Gastrocnemius medialis (tissue), 4 donors: ENCODE measurements at regions of chr10 and their contacts with region 1.

Region 1: GRCh38 chr10:122051251-122051996 is 62.5 kb downstream of the TACC2 start:
- DNase-seq: peak in 1 of 2 donors; percentile 52
- ATAC-seq: peak; percentile 18 to 50
- H3K4me3 ChIP-seq: no peak overlapping the region
- H3K27ac ChIP-seq: peak overlapping the region; percentile 78 to 92 (median 87)
- H3K4me1 ChIP-seq: peaks cover 22 to 35% of the 10 kb centered on the region in 2 donors
- H3K27me3 ChIP-seq: no peaks in the 10 kb centered on the region
- CTCF ChIP-seq: peak; percentile 40 to 73 (median 71)
- POLR2A ChIP-seq: no peak

Region 2: DNA sequence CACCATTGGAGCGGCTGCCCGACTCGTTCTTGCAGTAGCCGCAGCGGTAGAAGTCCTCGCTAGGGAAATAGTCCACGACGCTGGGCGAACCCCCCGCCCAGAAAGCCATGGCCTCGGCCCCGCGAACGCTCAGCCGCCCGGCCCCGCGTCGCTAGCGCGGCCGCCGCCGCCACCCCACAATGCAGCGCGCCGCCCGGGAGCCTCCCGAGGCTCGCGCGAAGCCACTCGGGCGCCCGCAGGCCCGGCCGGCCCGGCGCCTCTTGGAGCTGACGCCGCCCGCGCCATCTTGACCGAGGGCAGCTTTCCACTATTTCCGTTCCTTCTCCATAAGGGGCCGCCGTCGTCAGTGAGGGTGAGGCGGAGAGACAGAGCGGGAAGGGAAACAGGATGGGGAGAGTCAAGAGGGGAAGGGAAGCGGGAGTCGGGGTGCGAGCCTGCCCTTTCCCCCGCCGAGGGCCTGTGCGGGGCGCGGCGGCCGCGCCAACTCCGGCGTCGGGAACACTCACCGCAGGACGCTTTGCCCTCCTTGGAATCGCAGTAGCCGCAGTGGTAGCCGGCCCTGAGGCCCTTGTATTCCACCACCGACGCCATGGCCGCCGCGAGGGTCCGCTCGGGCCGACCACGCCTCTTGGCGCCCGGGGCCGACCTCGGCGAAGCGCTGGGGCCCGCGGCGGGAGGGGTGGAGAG is 123.4 kb before region 1 on chr10 and contains the start of gene ATE1:
- in situ Hi-C with region 1: no loop called
- intact Hi-C with region 1: loop called (anchors 5 kb)
- DNase-seq: peak; percentile 87 to 90
- ATAC-seq: peak; percentile 90
- H3K4me3 ChIP-seq: peak within 1 kb of the TSS; percentile 77 to 99 (median 86)
- H3K27ac ChIP-seq: peak within 1 kb of the TSS; percentile 90 to 99 (median 94)
- H3K4me1 ChIP-seq: peaks cover 18 to 21% of the 10 kb centered on the region in 2 donors
- H3K27me3 ChIP-seq: no peaks in the 10 kb centered on the region
- CTCF ChIP-seq: peak in 3 of 5 experiments; percentile 3 to 11 (median 6)
- POLR2A ChIP-seq: peak; percentile 69 to 84
- total RNA-seq, gene ATE1: 34.3 to 57.6 (median 39.4) TPM

Region 3: GRCh38 chr10:121974535-121975294 is 76.7 kb before region 1 on chr10 and contains the start of gene NSMCE4A:
- in situ Hi-C with region 1: no loop called
- intact Hi-C with region 1: loop called (anchors 2 kb)
- DNase-seq: peak; percentile 68 to 77
- ATAC-seq: peak; percentile 88 to 89
- H3K4me3 ChIP-seq: peak within 1 kb of the TSS; percentile 71 to 91 (median 81)
- H3K27ac ChIP-seq: peak within 1 kb of the TSS; percentile 94 to 99 (median 96)
- H3K4me1 ChIP-seq: peaks cover 16 to 19% of the 10 kb centered on the region in 2 donors
- H3K27me3 ChIP-seq: no peaks in the 10 kb centered on the region
- CTCF ChIP-seq: peak in 4 of 5 experiments; percentile 66 to 80 (median 68)
- POLR2A ChIP-seq: peak; percentile 87 to 92
- total RNA-seq, gene NSMCE4A: 20.1 to 37.7 (median 26.9) TPM

Region 4: DNA sequence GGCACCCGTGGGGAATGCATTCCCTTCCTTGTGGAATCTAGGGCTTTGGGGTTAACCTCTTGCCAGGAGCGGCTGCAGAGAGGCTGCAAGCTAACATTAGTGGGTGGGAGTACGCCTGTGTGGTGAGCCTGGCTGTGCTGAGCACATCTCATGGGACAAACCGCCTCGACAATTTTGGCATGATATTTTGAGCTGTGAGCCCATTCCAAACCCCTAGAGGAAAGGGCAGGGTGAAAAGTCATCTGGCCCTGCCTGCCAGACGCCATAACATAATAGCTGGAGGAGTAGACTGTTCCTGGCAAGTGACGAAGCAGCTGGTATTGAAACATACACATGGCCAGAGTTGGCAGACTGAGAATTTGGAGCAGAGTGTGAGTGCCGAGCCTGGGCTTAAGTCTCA is 47.5 kb after region 1 on chr10:
- in situ Hi-C with region 1: loop called in 1 of 4 experiments (anchors 10 kb)
- intact Hi-C with region 1: no loop called
- DNase-seq: peak; percentile 86 to 89
- ATAC-seq: peak; percentile 83 to 90
- H3K4me3 ChIP-seq: no peak overlapping the region
- H3K27ac ChIP-seq: peak overlapping the region; percentile 77 to 95 (median 89)
- H3K4me1 ChIP-seq: peaks cover 43 to 52% of the 10 kb centered on the region in 2 donors
- H3K27me3 ChIP-seq: no peaks in the 10 kb centered on the region
- CTCF ChIP-seq: no peak
- POLR2A ChIP-seq: no peak

Region 5: GRCh38 chr10:122232769-122233168 is 181.3 kb after region 1 on chr10:
- in situ Hi-C with region 1: no loop called
- intact Hi-C with region 1: loop called (anchors 10 kb)
- DNase-seq: no peak
- ATAC-seq: peak in 1 of 2 donors; percentile 21
- H3K4me3 ChIP-seq: no peak overlapping the region
- H3K27ac ChIP-seq: peak overlapping the region; percentile 83 to 95 (median 86)
- H3K4me1 ChIP-seq: peaks cover 34% of the 10 kb centered on the region in 2 donors
- H3K27me3 ChIP-seq: no peaks in the 10 kb centered on the region
- CTCF ChIP-seq: no peak
- POLR2A ChIP-seq: no peak